ENCODE measurements at regions of chr11 and their contacts with region 1.

Region 1: DNA sequence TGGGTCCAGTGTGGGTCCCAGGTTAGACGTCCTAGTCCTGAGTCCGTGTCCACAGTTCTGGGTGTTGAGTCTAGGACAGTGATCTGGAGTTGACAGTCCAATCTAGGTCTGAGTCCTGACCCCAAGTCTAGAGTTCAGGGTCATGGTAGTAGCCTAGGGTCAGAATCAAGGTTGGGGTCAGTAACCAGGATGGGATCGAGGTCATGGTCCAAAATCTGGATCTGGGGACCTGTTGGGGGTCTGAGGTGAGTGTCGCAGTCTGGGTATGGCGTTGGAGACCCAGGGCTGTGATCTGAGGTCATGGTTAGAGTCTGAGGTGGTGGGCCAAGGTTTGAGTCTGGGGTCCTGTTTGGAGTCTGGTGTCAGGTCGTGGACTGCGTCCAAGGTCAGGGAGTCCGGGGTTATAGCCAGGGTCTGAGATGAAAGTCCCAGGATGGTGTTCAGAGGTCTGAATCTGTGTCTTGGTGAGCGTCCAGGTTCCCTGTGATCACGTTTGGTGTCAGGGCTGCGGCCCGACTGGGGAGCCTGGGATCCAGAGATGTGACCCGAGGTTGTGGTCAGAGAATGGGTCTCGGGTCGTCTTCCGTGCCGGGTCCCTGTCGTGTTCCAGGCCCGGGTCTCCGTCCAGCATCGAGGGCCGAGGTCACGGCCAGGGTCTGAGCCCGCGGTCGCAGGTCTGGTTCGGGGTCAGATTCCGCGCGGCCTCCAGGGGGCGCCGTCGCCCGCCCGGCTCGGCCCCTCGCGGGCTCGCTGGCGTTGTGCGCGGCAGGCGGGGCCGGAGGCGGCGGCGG is 445 bp upstream of the GRK2 start:
- DNase-seq: peak; percentile 81
- H3K4me3 Mint-ChIP-seq: peak overlapping the region; percentile 72
- H3K27ac Mint-ChIP-seq: peak overlapping the region; percentile 87
- H3K4me1 Mint-ChIP-seq: peaks cover 72% of the 10 kb centered on the region
- H3K27me3 Mint-ChIP-seq: no peaks in the 10 kb centered on the region

Region 2: DNA sequence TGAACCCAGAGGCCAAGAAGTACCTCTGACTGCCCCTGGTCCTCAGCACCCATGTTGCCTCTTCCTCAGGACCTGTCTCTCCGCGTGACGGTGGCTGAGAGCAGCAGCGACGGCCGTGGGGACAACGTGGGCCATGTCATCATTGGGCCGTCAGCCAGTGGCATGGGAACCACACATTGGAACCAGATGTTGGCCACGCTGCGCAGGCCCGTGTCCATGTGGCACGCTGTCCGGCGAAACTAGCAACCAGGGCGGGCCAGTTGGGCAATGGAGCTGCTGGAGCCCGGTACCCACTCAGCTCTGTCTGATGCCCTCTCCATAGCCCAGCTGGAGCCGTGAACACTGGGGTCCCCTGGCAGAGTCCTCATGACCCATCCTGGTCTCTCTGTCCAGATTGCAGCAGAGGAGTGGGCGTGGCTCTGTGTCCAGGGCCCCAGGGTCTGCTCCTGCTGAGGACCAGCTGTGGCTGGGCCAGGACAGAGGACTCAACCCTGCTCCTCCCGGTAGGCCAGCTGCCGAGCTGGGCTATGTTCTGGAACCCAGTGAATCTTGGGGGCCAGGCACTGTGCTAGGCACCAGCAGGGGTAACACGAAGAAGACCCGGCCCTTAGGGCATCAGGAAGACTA is 217.2 kb before region 1 on chr11:
- CTCF ChIA-PET with region 1: no interaction called
- intact Hi-C with region 1: no loop called
- DNase-seq: no peak
- H3K4me3 Mint-ChIP-seq: no peak overlapping the region
- H3K27ac Mint-ChIP-seq: no peak overlapping the region
- H3K4me1 Mint-ChIP-seq: no peaks in the 10 kb centered on the region
- H3K27me3 Mint-ChIP-seq: peaks cover 2% of the 10 kb centered on the region

Region 3: GRCh38 chr11:67062308-67063063 is 203.3 kb before region 1 on chr11:
- CTCF ChIA-PET with region 1: no interaction called
- intact Hi-C with region 1: no loop called
- DNase-seq: no peak
- H3K4me3 Mint-ChIP-seq: no peak overlapping the region
- H3K27ac Mint-ChIP-seq: no peak overlapping the region
- H3K4me1 Mint-ChIP-seq: no peaks in the 10 kb centered on the region
- H3K27me3 Mint-ChIP-seq: no peaks in the 10 kb centered on the region

Region 4: GRCh38 chr11:67118801-67119584 is 146.8 kb before region 1 on chr11 and contains the start of gene KDM2A:
- CTCF ChIA-PET with region 1: no interaction called
- intact Hi-C with region 1: loop called (anchors 5 kb)
- DNase-seq: peak; percentile 99
- H3K4me3 Mint-ChIP-seq: peak within 1 kb of the TSS; percentile 97
- H3K27ac Mint-ChIP-seq: peak within 1 kb of the TSS; percentile 92
- H3K4me1 Mint-ChIP-seq: peaks cover 41% of the 10 kb centered on the region
- H3K27me3 Mint-ChIP-seq: no peaks in the 10 kb centered on the region
- total RNA-seq, gene KDM2A: 57.7 to 58.8 TPM

Region 5: GRCh38 chr11:67277231-67277961 is 11.6 kb after region 1 on chr11:
- CTCF ChIA-PET with region 1: interaction called, 15 read pairs
- intact Hi-C with region 1: loop called (anchors 1 kb)
- DNase-seq: peak; percentile 95
- H3K4me3 Mint-ChIP-seq: peak overlapping the region; percentile 73
- H3K27ac Mint-ChIP-seq: peak overlapping the region; percentile 99
- H3K4me1 Mint-ChIP-seq: peaks cover 69% of the 10 kb centered on the region
- H3K27me3 Mint-ChIP-seq: no peaks in the 10 kb centered on the region

Region 6: DNA sequence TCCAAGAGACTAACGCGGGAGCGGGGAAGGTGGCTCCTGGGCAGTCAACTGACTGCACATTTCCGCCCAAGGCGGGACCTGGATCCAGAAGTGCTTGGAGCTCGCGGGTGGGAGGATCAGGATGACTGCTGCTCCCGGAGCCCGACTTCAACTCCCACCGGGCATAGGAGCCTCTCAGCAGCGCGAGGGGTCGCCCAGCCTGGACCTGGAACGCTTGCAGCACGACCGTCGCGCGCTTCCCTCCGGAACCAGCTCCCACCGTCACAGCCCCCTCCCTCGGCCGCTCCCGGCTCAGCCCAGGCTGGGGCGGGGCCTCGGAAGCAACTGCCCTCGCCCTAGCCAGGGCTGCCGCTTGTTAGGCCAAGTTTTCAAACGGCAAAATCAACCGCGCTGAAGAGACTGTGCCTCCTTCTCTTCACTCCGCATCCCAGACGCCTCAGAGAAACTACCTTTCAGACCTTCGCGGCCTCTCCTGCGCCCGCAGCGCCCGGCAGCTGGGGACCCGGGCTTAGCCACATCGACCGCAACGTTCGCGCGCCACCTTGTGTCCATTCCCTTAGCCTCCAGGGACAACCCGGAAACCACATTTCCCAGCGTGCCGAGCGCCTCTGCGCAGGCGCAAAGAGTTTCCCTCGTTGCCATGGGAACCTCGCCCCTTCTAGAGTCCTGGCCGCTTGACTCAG is 51.5 kb after region 1 on chr11:
- CTCF ChIA-PET with region 1: interaction called, 108 read pairs
- intact Hi-C with region 1: loop called (anchors 1 kb)
- DNase-seq: peak; percentile 99
- H3K4me3 Mint-ChIP-seq: peak overlapping the region; percentile 92
- H3K27ac Mint-ChIP-seq: peak overlapping the region; percentile 97
- H3K4me1 Mint-ChIP-seq: peaks cover 23% of the 10 kb centered on the region
- H3K27me3 Mint-ChIP-seq: no peaks in the 10 kb centered on the region

Region 7: DNA sequence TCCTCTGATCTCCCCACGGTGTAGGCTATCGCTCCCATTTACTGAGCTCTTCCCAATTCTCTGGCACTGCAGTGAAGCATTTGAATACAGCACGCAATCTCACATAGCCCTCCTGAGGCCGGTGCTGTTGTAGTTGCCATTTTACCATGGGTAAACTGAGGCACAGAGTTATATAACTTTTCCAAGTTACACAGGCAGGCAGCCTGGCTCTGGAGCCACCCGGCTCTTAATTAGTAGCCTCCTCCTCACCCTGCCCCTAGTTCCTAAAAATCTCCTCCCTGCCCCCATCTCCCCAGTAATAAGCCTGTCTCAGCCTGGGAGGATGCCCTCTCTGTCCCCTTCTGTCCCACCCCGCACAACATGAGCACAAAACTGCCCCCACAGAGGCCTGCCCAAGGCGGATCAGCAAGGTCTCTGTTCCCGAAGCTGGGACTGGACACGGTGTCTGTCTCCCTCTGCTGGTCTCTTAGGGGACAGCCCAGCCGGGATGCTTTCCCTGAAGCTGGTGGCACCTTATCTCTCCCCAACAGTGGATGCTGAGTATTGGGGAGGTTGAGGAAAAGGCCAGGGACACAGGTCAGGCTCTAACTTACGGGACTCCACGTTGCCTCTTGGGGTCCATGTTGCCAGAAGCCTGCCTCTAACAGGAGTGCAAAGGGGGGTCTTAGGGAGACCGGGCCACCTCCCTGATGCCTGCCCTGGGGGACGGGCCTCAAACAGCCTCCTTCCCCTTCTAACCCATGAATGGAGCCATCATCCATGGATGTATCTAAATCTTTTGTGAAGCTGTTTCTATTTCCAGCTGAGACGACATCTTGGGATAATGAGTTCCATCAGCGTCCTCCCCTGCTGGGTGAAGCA is 116.7 kb after region 1 on chr11:
- CTCF ChIA-PET with region 1: interaction called, 47 read pairs
- intact Hi-C with region 1: loop called (anchors 1 kb)
- DNase-seq: peak; percentile 92
- H3K4me3 Mint-ChIP-seq: no peak overlapping the region
- H3K27ac Mint-ChIP-seq: no peak overlapping the region
- H3K4me1 Mint-ChIP-seq: peaks cover 2% of the 10 kb centered on the region
- H3K27me3 Mint-ChIP-seq: peaks cover 2% of the 10 kb centered on the region

Region 8: GRCh38 chr11:67507864-67508485 is 242.1 kb after region 1 on chr11 and contains the start of gene CDK2AP2:
- CTCF ChIA-PET with region 1: no interaction called
- intact Hi-C with region 1: loop called (anchors 5 kb)
- DNase-seq: peak; percentile 99
- H3K4me3 Mint-ChIP-seq: peak within 1 kb of the TSS; percentile 85
- H3K27ac Mint-ChIP-seq: peak within 1 kb of the TSS; percentile 97
- H3K4me1 Mint-ChIP-seq: peaks cover 35% of the 10 kb centered on the region
- H3K27me3 Mint-ChIP-seq: no peaks in the 10 kb centered on the region
- total RNA-seq, gene CDK2AP2: 53.7 to 55.1 TPM

Region 9: DNA sequence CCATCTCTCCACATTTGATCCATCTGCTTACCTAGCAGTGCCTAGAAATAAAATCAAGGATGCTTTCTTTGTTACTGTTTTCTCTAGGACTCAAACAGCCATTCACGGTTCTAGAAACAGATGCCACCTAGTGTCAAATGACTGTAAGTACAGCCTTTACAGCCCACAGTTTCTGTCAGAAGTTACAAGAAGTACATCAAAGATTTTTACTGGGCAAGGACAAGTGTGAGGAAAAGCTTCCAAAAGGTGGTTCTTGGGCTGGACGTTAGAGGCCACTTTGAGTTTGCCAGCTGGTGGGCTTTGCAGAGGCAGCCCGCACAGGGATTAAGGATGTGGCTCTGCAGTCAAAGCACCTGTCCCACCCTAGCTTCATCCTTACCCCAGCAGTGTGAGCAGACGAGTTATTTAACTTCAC is 940.4 kb after region 1 on chr11:
- CTCF ChIA-PET with region 1: no interaction called
- intact Hi-C with region 1: no loop called
- DNase-seq: peak; percentile 23
- H3K4me3 Mint-ChIP-seq: no peak overlapping the region
- H3K27ac Mint-ChIP-seq: no peak overlapping the region
- H3K4me1 Mint-ChIP-seq: peaks cover 73% of the 10 kb centered on the region
- H3K27me3 Mint-ChIP-seq: no peaks in the 10 kb centered on the region